Colonic mucosa (tissue), 4 donors: ENCODE measurements at regions of chr1 and their contacts with region 1.

Region 1: GRCh38 chr1:59296358-59297256 is at the start of gene FGGY:
- DNase-seq: peak; percentile 97
- H3K4me3 ChIP-seq: peak within 1 kb of the TSS; percentile 48
- H3K27ac ChIP-seq: peak within 1 kb of the TSS; percentile 99
- H3K4me1 ChIP-seq: peaks cover 7% of the 10 kb centered on the region
- H3K27me3 ChIP-seq: no peaks in the 10 kb centered on the region
- CTCF ChIP-seq: no peak
- total RNA-seq, gene FGGY: 12.5 to 19.5 TPM

Region 2: GRCh38 chr1:59446257-59446901 is 149.8 kb after region 1 on chr1:
- intact Hi-C with region 1: no loop called
- DNase-seq: no peak
- H3K4me3 ChIP-seq: no peak overlapping the region
- H3K27ac ChIP-seq: no peak overlapping the region
- H3K4me1 ChIP-seq: no peaks in the 10 kb centered on the region
- H3K27me3 ChIP-seq: no peaks in the 10 kb centered on the region
- CTCF ChIP-seq: no peak

Region 3: DNA sequence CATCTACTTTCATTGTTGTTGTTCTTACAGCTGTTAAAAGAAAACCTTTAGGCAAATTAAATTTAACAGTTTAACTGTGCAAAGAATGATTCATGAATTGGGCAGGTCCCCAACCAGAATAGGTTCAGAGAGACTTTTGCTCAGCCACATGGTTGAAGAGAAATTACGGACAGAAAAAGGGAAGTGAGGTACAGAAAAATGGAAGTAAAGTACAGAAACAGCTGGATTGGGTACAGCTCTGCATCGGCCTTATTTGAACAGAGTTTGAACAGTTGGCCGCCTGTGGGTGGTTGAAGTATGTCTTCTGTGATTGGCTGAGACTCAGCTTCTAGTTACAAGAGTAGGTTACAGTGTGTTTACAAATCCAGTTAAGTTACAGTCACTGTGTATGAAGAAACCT is 210.3 kb after region 1 on chr1:
- intact Hi-C with region 1: no loop called
- DNase-seq: no peak
- H3K4me3 ChIP-seq: no peak overlapping the region
- H3K27ac ChIP-seq: peak overlapping the region; percentile 11
- H3K4me1 ChIP-seq: no peaks in the 10 kb centered on the region
- H3K27me3 ChIP-seq: no peaks in the 10 kb centered on the region
- CTCF ChIP-seq: no peak

Region 4: DNA sequence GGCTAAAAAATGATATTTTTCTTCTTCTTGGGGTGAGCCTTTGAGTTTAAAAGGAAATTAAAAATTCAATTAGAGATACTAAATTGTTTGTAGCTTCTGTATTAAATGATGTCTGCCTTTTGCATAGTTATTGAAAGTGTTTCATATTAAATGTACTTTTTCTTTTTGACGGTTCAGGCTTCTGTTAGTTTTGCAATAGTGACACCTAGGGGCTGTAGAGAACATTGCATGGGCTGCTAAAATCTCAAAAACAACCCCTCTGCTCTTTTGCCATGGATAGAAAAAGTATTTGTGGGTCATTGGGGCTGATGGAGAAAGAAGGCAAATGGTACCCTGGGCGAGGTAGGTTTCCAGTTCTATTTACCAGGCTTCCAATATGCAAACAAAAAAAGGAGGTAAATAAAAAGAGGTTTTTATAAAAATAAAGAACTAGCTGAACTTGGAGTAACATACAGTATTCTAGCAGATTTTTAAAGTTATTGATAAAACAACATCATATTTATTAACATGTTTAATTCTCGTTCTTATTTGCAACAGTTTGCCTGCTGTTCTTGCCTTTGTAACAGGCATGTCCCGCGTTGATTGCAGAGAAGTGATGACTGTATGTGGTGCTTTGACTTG is 402.7 kb after region 1 on chr1:
- intact Hi-C with region 1: loop called (anchors 10 kb)
- DNase-seq: no peak
- H3K4me3 ChIP-seq: no peak overlapping the region
- H3K27ac ChIP-seq: no peak overlapping the region
- H3K4me1 ChIP-seq: no peaks in the 10 kb centered on the region
- H3K27me3 ChIP-seq: no peaks in the 10 kb centered on the region
- CTCF ChIP-seq: peak; percentile 89